Cardiac septum (tissue), 1 donor: ENCODE measurements at regions of chr22 and their contacts with region 1.

Region 1: DNA sequence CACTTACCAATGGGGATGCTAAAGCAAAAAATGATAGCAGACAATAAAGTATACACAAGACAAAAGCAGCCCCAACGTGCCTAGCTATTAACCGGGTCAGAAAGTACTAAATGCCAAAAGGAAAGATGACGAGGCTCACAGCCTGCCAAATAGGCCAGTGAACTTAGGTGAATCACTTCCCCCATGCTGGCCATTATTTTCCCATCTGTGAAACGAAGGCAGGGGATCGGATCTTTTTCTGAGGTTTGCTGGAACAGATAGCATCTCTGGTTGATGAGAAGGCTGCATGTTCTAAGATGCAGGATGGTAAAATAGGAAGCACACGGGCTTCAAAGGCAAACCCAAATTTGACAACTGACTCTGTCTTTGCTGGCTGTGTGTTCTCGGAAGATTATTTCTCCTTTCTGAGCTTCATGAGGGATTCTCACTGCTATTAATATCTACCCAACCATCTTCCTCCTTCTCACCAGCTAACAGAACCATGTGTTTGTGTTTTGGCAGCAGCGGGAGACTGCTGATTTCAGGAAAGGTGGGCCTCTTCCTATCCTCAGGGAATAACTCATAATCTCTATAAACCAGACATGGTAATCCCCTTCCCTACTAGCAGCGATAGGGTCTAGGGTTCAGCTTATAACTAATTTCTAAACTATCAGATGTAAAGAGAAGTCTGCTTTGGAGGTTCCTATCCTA is 390.7 kb downstream of the LARGE1 start:
- DNase-seq: no peak

Region 2: DNA sequence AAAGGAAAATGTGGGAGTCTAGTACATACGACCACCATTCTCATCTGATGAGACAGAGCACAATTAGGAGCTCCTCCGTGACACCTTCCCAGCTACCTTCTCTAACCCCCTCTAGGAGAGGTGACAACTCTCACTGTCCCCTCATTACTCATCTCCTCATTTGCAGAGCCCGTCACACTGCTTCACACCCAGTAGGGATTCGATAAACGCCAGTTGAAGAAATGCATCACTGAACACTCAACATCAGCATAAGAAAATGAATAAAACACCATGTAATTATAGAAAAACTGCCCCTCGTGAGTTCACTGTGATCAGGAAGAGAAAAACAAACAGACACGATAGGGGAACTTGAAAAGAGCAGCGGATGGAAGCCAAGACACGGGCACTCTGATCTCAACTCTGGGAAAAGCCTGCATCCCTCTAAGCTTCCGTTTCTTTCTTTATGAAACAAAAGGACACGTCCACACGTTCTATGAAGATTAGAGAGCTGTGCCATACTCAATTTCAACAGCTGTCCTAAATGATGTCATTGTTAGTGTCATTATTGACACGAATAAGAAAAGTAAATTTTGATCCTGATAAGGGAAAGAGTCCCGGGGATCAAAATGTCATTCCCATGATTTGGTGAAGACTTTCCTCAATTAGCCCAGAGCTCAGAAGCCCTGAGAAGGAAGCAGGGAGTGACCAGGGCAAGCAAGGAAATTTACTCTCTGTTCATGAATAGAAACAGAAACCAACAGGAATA is 33.8 kb after region 1 on chr22:
- intact Hi-C with region 1: loop called (anchors 5 kb)
- DNase-seq: no peak